ENCODE measurements at regions of chr13 and their contacts with region 1.

Region 1: DNA sequence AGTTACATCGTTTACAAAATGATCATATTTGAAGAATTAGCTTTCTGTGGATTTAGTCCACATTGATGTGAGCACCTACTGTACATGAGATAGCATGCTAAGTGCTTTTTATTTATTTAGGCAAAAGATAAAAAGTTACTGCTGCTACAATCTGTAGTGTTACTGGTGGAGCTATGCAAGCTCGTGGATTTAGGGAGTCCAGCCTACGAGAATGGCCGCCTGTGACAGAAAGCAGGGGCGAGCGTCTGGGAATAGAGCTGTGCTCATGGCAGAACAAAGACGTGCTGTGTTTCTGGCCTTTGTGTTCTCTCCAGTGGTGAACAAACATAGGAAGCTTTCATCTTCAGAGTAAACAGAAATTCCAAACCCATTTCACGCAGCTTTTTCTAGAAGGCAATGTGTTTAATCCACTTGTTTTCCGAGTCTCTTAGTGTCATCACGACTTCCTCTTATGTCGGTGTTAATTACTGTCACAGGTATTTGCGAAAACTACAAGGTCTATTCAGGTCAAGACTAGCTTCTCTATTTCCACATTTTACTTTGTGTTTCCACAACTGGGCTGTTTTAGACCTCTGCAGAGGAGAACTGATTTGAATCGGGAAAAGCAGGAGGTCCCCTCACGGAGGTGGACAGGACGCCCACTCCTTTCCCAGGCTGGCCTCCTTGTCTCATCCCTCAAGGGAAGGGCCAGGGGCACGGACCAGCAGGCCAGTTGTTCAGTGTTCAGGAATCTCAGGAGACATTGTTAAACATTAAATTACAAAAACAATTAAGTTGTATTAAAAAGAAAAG is 67.3 kb downstream of the ATP11A start:
- DNase-seq: no peak
- H3K4me3 ChIP-seq: no peak overlapping the region
- H3K27me3 ChIP-seq: no peaks in the 10 kb centered on the region
- CTCF ChIP-seq: no peak

Region 2: DNA sequence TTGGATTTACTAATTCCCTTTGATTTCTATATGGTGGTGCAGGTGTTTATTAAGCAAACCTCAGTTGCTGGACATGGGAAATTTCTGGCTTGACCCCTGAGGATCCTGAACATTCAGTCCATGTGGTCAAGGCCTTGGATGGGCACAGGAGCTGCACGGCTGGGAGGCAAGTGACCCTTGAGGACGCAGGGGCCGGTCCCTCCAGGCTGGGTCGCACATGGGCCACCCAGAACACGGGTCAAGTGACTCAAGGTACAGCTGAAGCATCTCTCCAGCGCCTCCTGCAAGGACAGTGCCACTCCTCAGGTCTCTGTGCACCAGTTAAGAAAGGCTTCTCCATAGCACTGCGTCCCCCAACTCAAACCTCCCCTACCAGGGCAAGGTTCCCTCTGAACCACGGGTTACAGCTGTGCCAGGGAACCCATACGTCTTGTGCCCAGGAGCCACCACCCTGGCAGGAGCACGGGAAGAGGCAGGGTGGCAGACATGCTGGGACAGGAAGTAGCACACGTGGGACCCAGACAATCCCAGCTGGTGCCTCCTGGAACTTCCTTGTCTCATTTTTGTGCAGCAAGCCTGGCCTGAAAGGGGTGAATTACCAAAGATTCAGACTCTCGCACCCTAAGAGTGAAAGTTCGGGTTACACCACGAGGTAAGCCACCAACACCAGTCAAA is 288.0 kb before region 1 on chr13:
- CTCF ChIA-PET with region 1: no interaction called
- POLR2A ChIA-PET with region 1: no interaction called
- DNase-seq: no peak
- H3K4me3 ChIP-seq: no peak overlapping the region
- H3K27me3 ChIP-seq: no peaks in the 10 kb centered on the region
- CTCF ChIP-seq: no peak

Region 3: GRCh38 chr13:112545856-112546255 is 211.3 kb before region 1 on chr13:
- CTCF ChIA-PET with region 1: no interaction called
- POLR2A ChIA-PET with region 1: interaction called, 18 read pairs
- DNase-seq: peak; percentile 21
- H3K4me3 ChIP-seq: no peak overlapping the region
- H3K27me3 ChIP-seq: no peaks in the 10 kb centered on the region
- CTCF ChIP-seq: no peak

Region 4: GRCh38 chr13:112740502-112741131 is 16.5 kb before region 1 on chr13:
- CTCF ChIA-PET with region 1: no interaction called
- POLR2A ChIA-PET with region 1: no interaction called
- DNase-seq: peak; percentile 70
- H3K4me3 ChIP-seq: peak overlapping the region; percentile 5; the same call in 1 of the 2 replicates
- H3K27me3 ChIP-seq: no peaks in the 10 kb centered on the region
- CTCF ChIP-seq: no peak

Region 5: DNA sequence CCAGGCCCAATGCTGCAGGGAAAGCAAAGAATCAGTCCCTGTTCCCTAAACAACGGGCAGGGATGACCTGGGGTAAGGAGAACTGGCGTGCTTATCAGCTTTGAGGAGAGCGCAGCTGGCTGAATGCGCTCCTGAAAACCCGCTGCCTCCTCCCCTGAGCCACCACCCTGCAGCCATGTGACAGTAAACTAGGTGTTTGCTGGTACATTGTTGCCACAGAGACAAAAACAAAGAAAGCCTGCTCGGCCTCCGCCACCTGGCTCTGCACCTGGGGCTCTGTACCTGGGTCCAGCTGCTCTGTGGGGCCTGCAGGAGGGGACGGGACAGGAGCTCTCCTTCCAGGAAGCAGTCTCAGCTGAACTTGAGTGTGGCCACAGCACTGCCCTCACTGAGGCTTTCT is 233.6 kb after region 1 on chr13:
- CTCF ChIA-PET with region 1: no interaction called
- POLR2A ChIA-PET with region 1: no interaction called
- DNase-seq: no peak
- H3K4me3 ChIP-seq: no peak overlapping the region
- H3K27me3 ChIP-seq: peaks cover 6% of the 10 kb centered on the region; the same call in 1 of the 2 replicates
- CTCF ChIP-seq: no peak

Region 6: DNA sequence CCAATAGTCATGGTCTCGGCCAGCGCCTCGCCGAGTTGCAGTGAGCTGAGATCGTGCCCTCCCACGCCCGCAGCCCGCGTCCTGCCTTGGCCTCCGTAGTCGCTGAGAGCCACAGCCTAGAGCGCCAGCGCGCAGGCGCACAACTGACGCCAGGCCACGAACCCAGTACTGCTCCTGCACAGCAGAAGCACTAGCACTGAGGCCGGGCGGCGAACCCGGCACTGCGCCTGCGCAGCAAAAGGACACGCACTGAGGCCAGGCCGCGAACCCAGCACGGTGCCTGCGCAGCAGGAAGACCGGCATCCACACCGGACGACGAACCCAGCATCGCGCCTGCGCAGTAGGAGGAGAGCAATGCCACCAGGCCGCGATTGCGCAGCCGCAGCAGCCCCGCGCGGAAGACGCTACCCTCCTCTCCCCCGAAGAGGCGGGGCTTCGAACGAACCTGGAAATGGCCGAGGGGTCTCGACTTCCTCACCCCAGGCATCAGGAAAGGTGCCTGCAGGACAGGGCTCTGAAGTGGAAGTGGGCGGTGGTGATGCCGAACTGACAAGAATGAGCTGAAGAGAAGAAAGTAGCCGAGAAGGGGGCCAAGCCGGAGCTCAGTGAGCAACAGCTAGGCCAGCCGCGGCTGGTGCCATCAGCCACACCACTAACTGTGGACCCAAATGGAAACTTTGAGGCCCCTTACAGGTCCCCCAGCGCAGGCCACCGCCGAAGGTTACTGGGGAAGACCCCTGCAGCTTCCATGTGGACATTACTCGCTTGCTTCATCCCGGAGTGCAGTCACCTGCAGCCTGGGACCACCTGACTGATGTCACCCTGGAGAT is 373.0 kb after region 1 on chr13:
- CTCF ChIA-PET with region 1: no interaction called
- POLR2A ChIA-PET with region 1: no interaction called
- DNase-seq: no peak
- H3K4me3 ChIP-seq: no peak overlapping the region
- H3K27me3 ChIP-seq: peaks cover 1% of the 10 kb centered on the region; the same call in 1 of the 2 replicates
- CTCF ChIP-seq: no peak